ENCODE measurements at regions of chr10 and their contacts with region 1.

Region 1: GRCh38 chr10:43671656-43672531 is 23.2 kb upstream of the ZNF32 start:
- DNase-seq: peak; percentile 79 to 81
- H3K4me3 ChIP-seq: no peak overlapping the region
- H3K4me3 Mint-ChIP-seq: no peak overlapping the region
- H3K27ac Mint-ChIP-seq: no peak overlapping the region
- H3K4me1 ChIP-seq: no peaks in the 10 kb centered on the region
- H3K4me1 Mint-ChIP-seq: peaks cover 5% of the 10 kb centered on the region
- H3K27me3 ChIP-seq: no peaks in the 10 kb centered on the region
- H3K27me3 Mint-ChIP-seq: peaks cover 27% of the 10 kb centered on the region
- CTCF ChIP-seq: peak; percentile 68 to 92

Region 2: DNA sequence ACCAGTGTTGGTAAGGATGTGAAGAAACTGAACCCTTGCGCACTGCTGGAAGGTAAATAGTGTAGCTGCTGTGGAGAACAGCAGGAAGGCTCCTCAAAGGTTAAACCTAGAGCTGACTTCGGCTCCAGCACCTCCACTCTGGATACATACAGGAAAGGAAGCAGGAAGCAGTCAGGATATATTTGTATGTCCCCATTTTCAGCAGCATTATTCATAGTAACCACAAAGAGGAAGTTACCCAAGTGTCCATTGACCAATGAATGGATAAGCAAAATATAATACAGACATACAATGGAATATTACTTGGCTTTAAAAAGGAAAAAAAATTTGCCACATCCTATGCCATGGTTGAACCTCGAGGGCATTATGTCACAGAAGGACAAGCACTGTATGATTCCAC is 580.0 kb before region 1 on chr10:
- CTCF ChIA-PET with region 1: no interaction called
- POLR2A ChIA-PET with region 1: no interaction called
- intact Hi-C with region 1: no loop called
- DNase-seq: no peak
- H3K4me3 ChIP-seq: no peak overlapping the region
- H3K4me3 Mint-ChIP-seq: no peak overlapping the region
- H3K27ac Mint-ChIP-seq: no peak overlapping the region
- H3K4me1 ChIP-seq: no peaks in the 10 kb centered on the region
- H3K4me1 Mint-ChIP-seq: no peaks in the 10 kb centered on the region
- H3K27me3 ChIP-seq: peaks cover 4% of the 10 kb centered on the region
- H3K27me3 Mint-ChIP-seq: peaks cover 32% of the 10 kb centered on the region
- CTCF ChIP-seq: no peak

Region 3: GRCh38 chr10:43785252-43785651 is 113.4 kb after region 1 on chr10:
- CTCF ChIA-PET with region 1: no interaction called
- POLR2A ChIA-PET with region 1: no interaction called
- intact Hi-C with region 1: loop called (anchors 1 kb)
- DNase-seq: peak in 1 of 2 experiments; percentile 20
- H3K4me3 ChIP-seq: no peak overlapping the region
- H3K4me3 Mint-ChIP-seq: no peak overlapping the region
- H3K27ac Mint-ChIP-seq: no peak overlapping the region
- H3K4me1 ChIP-seq: no peaks in the 10 kb centered on the region
- H3K4me1 Mint-ChIP-seq: no peaks in the 10 kb centered on the region
- H3K27me3 ChIP-seq: no peaks in the 10 kb centered on the region
- H3K27me3 Mint-ChIP-seq: peaks cover 20% of the 10 kb centered on the region
- CTCF ChIP-seq: peak; percentile 25 to 33

Region 4: DNA sequence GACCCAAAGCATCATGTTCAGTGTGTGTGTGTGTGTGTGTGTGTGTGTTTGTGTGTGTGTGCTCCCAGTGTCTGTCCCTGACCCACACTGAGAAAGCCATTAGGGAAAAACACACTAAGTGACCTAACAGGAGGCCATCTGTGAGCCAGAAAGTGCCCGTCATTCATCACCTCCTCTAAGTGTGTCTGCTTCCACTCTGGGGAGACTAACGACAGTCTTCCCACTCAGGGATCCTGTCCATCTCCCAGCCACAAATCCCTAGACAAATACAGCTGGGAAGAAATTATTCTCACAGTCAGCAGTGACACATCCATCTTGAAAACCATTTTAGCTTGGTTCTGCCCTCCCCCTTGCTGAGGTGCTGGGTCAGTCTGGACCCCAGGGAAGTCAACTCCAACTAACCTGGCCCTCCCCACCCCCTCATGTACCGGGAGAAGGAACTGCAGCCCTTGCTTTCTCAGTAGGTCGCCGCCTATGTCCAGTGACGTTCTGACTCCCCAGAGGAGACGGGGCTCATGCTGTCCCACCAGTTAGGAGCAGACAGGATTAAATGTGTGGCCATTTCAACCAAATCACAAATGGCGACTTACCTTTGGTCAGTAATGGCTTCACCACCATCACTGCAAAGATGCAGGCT is 273.3 kb after region 1 on chr10:
- CTCF ChIA-PET with region 1: no interaction called
- POLR2A ChIA-PET with region 1: no interaction called
- intact Hi-C with region 1: no loop called
- DNase-seq: peak in 1 of 2 experiments; percentile 16
- H3K4me3 ChIP-seq: no peak overlapping the region
- H3K4me3 Mint-ChIP-seq: no peak overlapping the region
- H3K27ac Mint-ChIP-seq: no peak overlapping the region
- H3K4me1 ChIP-seq: no peaks in the 10 kb centered on the region
- H3K4me1 Mint-ChIP-seq: no peaks in the 10 kb centered on the region
- H3K27me3 ChIP-seq: no peaks in the 10 kb centered on the region
- H3K27me3 Mint-ChIP-seq: peaks cover 4% of the 10 kb centered on the region
- CTCF ChIP-seq: no peak

Region 5: GRCh38 chr10:44386546-44387052 is 714.7 kb after region 1 on chr10:
- CTCF ChIA-PET with region 1: interaction called, 7 read pairs
- POLR2A ChIA-PET with region 1: no interaction called
- intact Hi-C with region 1: loop called (anchors 1 kb)
- DNase-seq: peak; percentile 55 to 82
- H3K4me3 ChIP-seq: no peak overlapping the region
- H3K4me3 Mint-ChIP-seq: peak overlapping the region; percentile 38
- H3K27ac Mint-ChIP-seq: no peak overlapping the region
- H3K4me1 ChIP-seq: peaks cover 9% of the 10 kb centered on the region
- H3K4me1 Mint-ChIP-seq: no peaks in the 10 kb centered on the region
- H3K27me3 ChIP-seq: peaks cover 1% of the 10 kb centered on the region
- H3K27me3 Mint-ChIP-seq: peaks cover 18% of the 10 kb centered on the region
- CTCF ChIP-seq: peak; percentile 92 to 98

Region 6: GRCh38 chr10:44864637-44865288 is 1192.9 kb after region 1 on chr10:
- CTCF ChIA-PET with region 1: interaction called, 3 read pairs
- POLR2A ChIA-PET with region 1: no interaction called
- intact Hi-C with region 1: loop called (anchors 1 kb)
- DNase-seq: peak; percentile 91 to 98
- H3K4me3 ChIP-seq: peak overlapping the region; percentile 46
- H3K4me3 Mint-ChIP-seq: peak overlapping the region; percentile 84
- H3K27ac Mint-ChIP-seq: peak overlapping the region; percentile 77
- H3K4me1 ChIP-seq: peaks cover 15% of the 10 kb centered on the region
- H3K4me1 Mint-ChIP-seq: peaks cover 11% of the 10 kb centered on the region
- H3K27me3 ChIP-seq: peaks cover 4% of the 10 kb centered on the region; the same call in 1 of the 2 replicates
- H3K27me3 Mint-ChIP-seq: peaks cover 34% of the 10 kb centered on the region
- CTCF ChIP-seq: peak; percentile 98 to 99

Measured in Caco-2 (cell line).